ENCODE measurements at regions of chr9 and their contacts with region 1.

Region 1: GRCh38 chr9:4640027-4640426 is 22.1 kb upstream of the PLPP6 start:
- DNase-seq: peak; percentile 22
- H3K4me3 ChIP-seq: no peak overlapping the region
- CTCF ChIP-seq: peak; percentile 65

Region 2: GRCh38 chr9:4422495-4422894 is 217.5 kb before region 1 on chr9:
- in situ Hi-C with region 1: loop called (anchors 25 kb)
- DNase-seq: no peak
- H3K4me3 ChIP-seq: no peak overlapping the region
- CTCF ChIP-seq: no peak